ENCODE measurements at regions of chr2 and their contacts with region 1.

Region 1: DNA sequence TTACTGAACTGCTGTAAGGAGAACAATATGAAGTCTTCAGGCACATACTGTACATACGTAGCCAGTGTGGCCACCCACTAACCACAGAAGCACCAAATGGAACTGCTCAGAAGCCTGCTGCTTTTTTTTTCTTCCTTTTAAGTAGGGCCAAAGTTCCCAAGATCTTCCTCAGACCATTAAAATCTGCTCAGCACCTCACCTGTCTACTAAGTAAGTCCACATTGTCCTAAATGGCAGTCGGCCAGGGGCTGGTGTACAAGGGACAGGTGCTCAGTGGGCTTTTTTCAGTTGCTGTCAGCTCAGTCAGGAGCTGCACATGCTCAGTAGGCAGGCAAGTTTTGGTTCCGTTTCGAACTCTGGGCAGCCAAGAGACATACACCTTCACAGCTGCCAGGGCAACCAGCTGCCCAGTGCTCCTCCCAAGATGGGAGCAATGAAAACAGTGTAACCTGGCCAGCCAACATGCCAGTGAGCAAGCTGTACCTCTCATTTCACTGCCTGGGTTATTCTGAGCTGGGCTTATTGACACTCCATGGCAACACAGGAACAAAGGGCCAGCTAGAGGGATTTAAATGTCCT is 86.1 kb downstream of the ACVR1 start:
- DNase-seq: peak; percentile 63
- H3K4me3 ChIP-seq: peak overlapping the region; percentile 34
- H3K27ac ChIP-seq: peak overlapping the region; percentile 87
- H3K4me1 ChIP-seq: peaks cover 74% of the 10 kb centered on the region
- H3K27me3 ChIP-seq: no peaks in the 10 kb centered on the region
- CTCF ChIP-seq: no peak

Region 2: GRCh38 chr2:157838442-157839161 is 48.6 kb after region 1 on chr2:
- intact Hi-C with region 1: loop called (anchors 5 kb)
- DNase-seq: peak; percentile 19
- H3K4me3 ChIP-seq: peak overlapping the region; percentile 58
- H3K27ac ChIP-seq: peak overlapping the region; percentile 88
- H3K4me1 ChIP-seq: peaks cover 84% of the 10 kb centered on the region
- H3K27me3 ChIP-seq: no peaks in the 10 kb centered on the region
- CTCF ChIP-seq: no peak

Region 3: DNA sequence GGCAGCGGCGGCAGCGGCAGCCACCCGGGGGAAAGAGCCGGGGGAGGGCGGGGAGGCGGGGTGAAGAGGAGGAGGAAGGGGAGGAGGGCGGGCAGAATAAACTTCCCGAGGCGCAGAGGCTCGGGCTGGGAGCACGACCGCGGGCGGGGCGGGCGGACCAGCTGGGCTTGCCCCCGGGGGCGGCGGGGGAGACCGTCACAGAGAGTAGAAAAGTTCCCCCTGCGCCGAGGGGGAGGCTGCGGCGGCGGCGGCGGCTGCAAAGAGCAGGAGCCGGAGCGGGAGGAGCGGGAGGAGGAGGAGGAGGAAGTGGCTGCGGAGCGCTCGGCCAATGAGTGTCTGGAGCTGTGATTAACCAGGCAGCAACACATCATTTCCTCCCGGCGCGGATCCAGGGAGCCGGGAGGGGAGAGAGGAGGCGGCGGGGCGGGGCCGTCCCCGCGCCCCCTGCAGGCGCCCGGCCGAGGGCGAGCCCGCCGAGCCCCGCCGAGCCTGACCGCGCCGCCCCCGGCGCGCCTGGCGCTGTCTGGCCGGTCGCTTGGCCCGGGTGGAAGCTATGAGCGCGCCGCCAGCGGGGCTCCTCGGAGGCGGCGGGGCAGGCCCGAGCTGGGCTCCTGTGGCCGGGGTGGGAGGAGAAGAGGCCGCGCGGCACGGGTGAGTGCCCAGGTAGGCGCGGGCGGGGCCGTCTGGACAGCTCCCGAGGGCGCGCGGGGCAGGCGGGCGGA is 86.2 kb after region 1 on chr2 and contains the start of gene ACVR1:
- intact Hi-C with region 1: loop called (anchors 5 kb)
- DNase-seq: peak; percentile 96
- H3K4me3 ChIP-seq: peak within 1 kb of the TSS; percentile 91
- H3K27ac ChIP-seq: peak within 1 kb of the TSS; percentile 98
- H3K4me1 ChIP-seq: peaks cover 49% of the 10 kb centered on the region
- H3K27me3 ChIP-seq: no peaks in the 10 kb centered on the region
- CTCF ChIP-seq: peak; percentile 52
- total RNA-seq, gene ACVR1: 30.6 TPM